ENCODE measurements at regions of chr9 and their contacts with region 1.

Region 1: GRCh38 chr9:107809871-107810460 is 320.4 kb upstream of the KLF4 start:
- DNase-seq: no peak
- ATAC-seq: no peak
- H3K4me3 ChIP-seq: no peak overlapping the region
- H3K27ac ChIP-seq: no peak overlapping the region
- H3K4me1 ChIP-seq: peaks cover 0 to 9% (median 0%) of the 10 kb centered on the region in 12 donors
- H3K27me3 ChIP-seq: no peaks in the 10 kb centered on the region
- CTCF ChIP-seq: no peak
- POLR2A ChIP-seq: no peak

Region 2: GRCh38 chr9:107707428-107707838 is 102.5 kb before region 1 on chr9:
- intact Hi-C with region 1: loop called in 1 of 10 experiments (anchors 10 kb)
- DNase-seq: no peak
- ATAC-seq: peak in 1 of 4 donors; percentile 58
- H3K4me3 ChIP-seq: no peak overlapping the region
- H3K27ac ChIP-seq: no peak overlapping the region
- H3K4me1 ChIP-seq: peaks cover 0 to 31% (median 14%) of the 10 kb centered on the region in 12 donors
- H3K27me3 ChIP-seq: no peaks in the 10 kb centered on the region
- CTCF ChIP-seq: no peak
- POLR2A ChIP-seq: no peak